Astrocyte of the cerebellum (primary cell): ENCODE measurements at regions of chr12 and their contacts with region 1.

Region 1: DNA sequence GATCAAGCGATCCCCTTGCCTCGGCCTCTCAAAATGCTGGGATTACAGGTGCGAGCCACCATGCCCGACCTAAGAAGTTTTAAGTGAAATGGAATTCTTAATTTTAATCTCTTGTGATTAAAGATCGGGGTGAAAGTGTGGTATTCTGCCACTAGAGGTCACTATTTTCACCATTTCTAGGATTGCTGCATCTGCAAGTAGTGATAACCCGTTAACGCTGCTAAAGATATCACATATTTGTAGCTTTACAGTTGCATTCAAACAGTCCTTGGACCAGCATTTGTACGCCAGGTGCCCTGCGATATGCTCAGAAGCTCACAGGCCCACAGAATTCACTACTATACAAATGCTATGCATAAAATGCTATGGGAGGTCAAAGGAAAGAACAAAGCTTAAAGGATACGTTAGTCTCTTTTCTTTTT is 19.3 kb downstream of the CCDC62 start:
- DNase-seq: peak; percentile 44
- H3K4me3 ChIP-seq: no peak overlapping the region
- CTCF ChIP-seq: peak; percentile 56

Region 2: DNA sequence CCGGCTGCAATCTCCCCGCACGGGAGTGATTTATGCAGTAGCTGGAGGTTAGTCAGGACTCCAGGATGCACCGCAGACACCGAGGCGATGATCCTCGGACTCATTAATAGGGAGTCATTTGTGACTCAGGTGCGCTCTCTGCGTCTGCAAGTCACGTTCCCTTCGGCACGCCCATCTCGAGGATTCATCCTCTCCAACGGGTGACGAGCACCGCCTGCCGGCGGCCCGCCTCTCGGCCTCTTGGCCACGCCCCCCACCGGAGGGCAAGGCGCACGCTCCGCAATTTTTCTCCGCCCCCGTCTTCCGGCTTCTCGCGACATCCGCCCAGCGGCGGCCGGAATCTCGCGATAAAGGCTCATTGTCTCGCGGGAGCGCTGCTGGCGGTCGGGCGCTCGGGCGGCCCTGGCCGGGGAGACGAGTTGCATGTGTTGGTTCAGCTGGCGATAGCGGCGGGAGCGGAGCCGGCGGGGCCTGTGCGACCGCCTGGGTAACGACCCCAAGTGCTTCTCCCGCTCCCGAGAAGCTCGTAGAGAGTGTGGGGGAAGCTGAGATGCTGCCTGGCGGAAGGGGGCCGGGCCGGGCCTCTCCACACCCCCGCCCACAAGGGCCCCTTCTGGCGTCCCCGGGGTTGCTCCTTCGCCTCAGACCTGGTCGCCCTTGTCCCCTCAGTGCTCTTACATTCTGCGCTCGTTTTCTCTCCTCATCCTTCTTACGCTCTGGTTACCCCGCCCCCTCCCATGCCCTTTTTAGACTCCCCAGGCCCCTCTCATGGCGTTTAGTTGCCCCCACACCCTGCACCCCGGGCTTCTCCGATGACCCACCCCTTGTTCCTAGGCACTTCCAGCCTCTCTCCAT is 41.0 kb before region 1 on chr12 and contains the start of gene DENR:
- in situ Hi-C with region 1: no loop called
- DNase-seq: peak; percentile 90
- H3K4me3 ChIP-seq: peak within 1 kb of the TSS; percentile 96
- CTCF ChIP-seq: peak; percentile 96

Region 3: DNA sequence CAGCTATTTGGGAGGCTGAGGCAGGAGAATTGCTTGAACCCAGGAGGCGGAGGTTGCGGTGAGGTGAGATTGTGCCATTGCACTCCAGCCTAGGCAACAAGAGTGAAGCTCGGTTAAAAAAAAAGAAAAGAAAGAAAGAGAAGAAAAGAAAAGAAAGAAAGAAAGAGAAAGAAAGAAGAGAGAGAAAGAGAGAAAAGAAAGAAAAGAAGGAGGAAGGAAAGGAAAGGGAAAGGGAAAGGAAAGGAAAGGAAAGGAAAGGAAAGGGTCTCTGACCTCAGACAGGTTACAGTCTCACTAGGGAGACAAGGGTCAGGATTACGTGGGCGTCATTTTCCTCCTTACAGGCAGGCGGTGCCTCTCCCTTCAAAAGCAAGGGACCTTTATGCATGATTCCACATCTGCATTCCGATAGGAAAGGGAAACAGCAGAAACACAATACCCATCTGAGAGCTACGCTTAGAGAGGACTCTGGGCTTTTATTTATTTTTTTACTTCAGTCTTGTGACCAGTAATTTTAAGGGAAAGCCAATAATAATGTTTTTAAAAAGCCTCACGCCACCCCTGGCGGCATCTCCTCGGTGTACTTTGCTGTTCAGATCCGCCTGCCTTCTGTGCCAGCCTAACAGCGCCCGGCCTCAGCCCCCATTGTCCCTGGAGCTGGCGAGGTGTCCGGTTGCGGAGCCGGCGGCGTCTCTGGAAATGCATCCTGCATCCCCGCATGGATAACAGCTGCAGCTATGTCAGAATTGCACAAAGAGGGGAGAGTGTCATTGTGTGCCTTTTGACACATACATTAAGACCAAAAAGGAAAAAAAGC is 40.6 kb after region 1 on chr12:
- in situ Hi-C with region 1: loop called (anchors 5 kb)
- DNase-seq: no peak
- H3K4me3 ChIP-seq: peak overlapping the region; percentile 54
- CTCF ChIP-seq: peak; percentile 21

Region 4: DNA sequence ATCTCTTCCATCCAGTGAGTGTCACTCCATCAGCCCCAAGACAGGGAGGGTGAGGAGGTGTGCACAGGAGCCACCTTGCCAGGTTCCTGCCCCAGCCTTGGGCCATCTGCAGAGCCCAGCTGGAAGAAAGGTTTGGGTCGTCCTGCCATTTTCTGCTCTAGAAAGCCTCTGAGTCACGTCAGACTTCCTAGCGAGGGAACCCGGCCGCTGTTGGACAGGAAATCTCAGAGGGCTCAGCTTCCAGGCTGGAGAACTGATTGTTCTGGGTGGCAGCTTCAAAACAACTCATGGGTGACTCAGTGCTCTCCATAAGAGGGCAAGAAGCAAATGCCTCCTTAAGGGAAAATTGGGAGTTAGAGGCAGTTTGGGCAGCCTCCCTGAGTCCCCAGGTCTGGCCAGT is 58.1 kb after region 1 on chr12:
- in situ Hi-C with region 1: no loop called
- DNase-seq: peak; percentile 49
- H3K4me3 ChIP-seq: no peak overlapping the region
- CTCF ChIP-seq: no peak